Calu3 (cell line): ENCODE measurements at regions of chr16 and their contacts with region 1.

Region 1: DNA sequence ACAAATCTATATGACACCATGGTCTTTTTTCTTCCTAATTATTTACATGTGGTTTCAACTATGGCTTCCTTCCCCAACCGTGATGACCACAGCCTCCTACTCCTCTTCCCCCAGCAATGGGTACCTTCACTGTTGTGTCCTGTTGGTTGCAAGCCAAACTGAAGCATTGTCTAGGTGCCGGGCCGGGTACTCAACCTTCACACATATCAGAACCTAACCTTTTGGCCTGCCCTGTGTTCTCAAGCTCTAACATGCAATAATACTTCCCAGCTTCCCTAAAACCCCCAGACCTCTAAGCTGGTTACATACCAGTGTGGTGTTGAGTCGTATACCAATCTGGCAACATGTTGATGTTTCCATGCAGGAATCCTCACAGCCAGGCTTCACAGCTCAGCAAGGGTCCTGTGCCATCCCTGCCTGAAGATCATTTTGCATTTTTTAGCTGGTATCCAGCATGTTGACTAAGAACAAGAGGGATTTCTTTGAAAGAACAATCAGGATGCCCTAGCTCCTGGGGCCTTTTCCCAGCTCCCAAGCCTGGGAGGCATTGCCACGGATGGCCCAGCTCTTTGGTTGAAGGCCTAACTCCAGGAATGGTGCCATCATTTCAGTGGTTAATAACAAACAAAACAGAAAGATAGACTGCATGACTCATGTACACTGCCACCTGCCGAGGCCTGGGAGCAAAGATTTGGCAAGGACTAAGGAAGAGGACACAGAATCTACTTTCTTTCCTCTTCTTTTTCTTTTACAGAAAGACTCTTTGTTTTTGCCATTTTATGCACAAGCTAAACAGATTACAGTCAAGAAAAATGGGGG is 373.7 kb upstream of the SALL1 start:
- DNase-seq: peak; percentile 46
- H3K4me3 Mint-ChIP-seq: no peak overlapping the region
- H3K27ac Mint-ChIP-seq: no peak overlapping the region
- H3K4me1 Mint-ChIP-seq: peaks cover 12% of the 10 kb centered on the region
- H3K27me3 Mint-ChIP-seq: no peaks in the 10 kb centered on the region
- CTCF ChIP-seq: peak; percentile 30

Region 2: DNA sequence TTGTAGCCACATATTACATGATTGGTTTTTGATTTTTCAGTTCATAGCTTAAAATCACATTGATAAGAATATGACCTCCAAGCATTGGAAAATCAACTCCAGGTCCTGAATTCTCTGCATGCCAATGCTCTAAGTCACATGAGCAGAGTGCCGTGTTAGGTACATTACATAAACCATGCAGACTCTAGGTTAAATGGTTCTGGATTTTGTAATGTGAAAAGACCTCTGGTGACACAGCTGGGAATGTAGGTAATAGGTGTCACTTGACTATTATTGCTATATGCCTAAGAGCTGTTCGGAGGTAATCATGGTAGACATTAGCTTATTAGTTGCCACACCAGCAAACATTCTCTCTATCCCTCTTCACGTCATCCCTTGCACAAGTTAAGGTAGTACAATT is 142.5 kb before region 1 on chr16:
- CTCF ChIA-PET with region 1: no interaction called
- intact Hi-C with region 1: loop called (anchors 5 kb)
- DNase-seq: peak; percentile 30
- H3K4me3 Mint-ChIP-seq: no peak overlapping the region
- H3K27ac Mint-ChIP-seq: no peak overlapping the region
- H3K4me1 Mint-ChIP-seq: peaks cover 68% of the 10 kb centered on the region
- H3K27me3 Mint-ChIP-seq: no peaks in the 10 kb centered on the region
- CTCF ChIP-seq: no peak